IMR-90 (cell line): ENCODE measurements at regions of chr22 and their contacts with region 1.

Region 1: GRCh38 chr22:25334162-25334490 is 114.7 kb downstream of the CRYBB2 start:
- DNase-seq: peak; percentile 16
- ATAC-seq: peak; percentile 77
- H3K4me3 ChIP-seq: no peak overlapping the region
- H3K27ac ChIP-seq: no peak overlapping the region
- H3K4me1 ChIP-seq: no peaks in the 10 kb centered on the region
- H3K27me3 ChIP-seq: no peaks in the 10 kb centered on the region
- CTCF ChIP-seq: peak; percentile 48
- POLR2A ChIP-seq: no peak
- RAD21 ChIP-seq: peak; percentile 39; the same call in 1 of the 2 replicates

Region 2: DNA sequence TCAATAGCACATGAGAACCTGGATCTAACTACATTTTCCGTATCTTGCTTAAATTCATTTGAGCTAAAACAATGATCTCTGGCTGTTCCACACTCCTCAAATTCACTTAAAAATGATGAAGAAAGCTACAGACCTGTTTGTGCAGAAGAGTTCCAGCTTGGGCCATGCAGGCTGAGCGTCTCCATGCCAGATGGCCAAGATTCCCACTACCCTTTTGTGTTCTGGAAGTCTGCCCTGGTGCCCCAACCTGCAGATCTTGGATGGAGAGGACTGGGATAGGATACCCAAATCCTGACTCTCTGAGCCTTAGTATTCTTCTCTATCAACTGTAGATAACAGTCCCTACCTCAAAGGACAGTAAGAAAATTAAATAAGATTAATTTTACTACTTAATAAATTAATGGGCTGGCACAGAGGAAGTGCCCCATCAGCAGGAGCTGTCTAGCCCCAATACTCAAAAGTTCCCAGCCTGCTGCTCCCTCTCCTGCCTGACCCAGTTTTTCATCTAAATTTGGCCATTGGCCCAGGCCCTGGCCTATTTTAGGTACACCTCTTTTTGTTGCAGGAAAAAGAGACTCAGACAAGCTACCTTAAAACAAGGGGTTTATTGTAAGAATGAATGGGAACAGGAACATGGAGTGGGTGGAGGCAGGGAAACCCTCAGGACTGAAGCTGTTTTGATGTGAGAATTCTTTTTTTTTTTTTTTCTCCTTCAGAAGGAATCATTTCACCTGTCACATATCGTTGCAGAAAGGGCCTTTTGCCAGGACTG is 148.9 kb after region 1 on chr22:
- CTCF ChIA-PET with region 1: interaction called, 10 read pairs
- POLR2A ChIA-PET with region 1: no interaction called
- dilution Hi-C with region 1: no loop called
- in situ Hi-C with region 1: no loop called
- intact Hi-C with region 1: no loop called
- DNase-seq: no peak
- ATAC-seq: no peak
- H3K4me3 ChIP-seq: no peak overlapping the region
- H3K27ac ChIP-seq: no peak overlapping the region
- H3K4me1 ChIP-seq: 0 out of 2 replicates have a peak, but pooled peaks cover under 1% of the 10 kb centered on the region
- H3K27me3 ChIP-seq: no peaks in the 10 kb centered on the region
- CTCF ChIP-seq: no peak
- POLR2A ChIP-seq: no peak
- RAD21 ChIP-seq: no peak

Region 3: GRCh38 chr22:26143801-26144325 is 809.7 kb after region 1 on chr22:
- CTCF ChIA-PET with region 1: no interaction called
- POLR2A ChIA-PET with region 1: no interaction called
- dilution Hi-C with region 1: no loop called
- in situ Hi-C with region 1: no loop called
- intact Hi-C with region 1: no loop called
- DNase-seq: no peak
- ATAC-seq: no peak
- H3K4me3 ChIP-seq: no peak overlapping the region
- H3K27ac ChIP-seq: no peak overlapping the region
- H3K4me1 ChIP-seq: no peaks in the 10 kb centered on the region
- H3K27me3 ChIP-seq: no peaks in the 10 kb centered on the region
- CTCF ChIP-seq: no peak
- POLR2A ChIP-seq: no peak
- RAD21 ChIP-seq: no peak